Left colon (tissue), 2 donors: ENCODE measurements at regions of chr6 and their contacts with region 1.

Region 1: DNA sequence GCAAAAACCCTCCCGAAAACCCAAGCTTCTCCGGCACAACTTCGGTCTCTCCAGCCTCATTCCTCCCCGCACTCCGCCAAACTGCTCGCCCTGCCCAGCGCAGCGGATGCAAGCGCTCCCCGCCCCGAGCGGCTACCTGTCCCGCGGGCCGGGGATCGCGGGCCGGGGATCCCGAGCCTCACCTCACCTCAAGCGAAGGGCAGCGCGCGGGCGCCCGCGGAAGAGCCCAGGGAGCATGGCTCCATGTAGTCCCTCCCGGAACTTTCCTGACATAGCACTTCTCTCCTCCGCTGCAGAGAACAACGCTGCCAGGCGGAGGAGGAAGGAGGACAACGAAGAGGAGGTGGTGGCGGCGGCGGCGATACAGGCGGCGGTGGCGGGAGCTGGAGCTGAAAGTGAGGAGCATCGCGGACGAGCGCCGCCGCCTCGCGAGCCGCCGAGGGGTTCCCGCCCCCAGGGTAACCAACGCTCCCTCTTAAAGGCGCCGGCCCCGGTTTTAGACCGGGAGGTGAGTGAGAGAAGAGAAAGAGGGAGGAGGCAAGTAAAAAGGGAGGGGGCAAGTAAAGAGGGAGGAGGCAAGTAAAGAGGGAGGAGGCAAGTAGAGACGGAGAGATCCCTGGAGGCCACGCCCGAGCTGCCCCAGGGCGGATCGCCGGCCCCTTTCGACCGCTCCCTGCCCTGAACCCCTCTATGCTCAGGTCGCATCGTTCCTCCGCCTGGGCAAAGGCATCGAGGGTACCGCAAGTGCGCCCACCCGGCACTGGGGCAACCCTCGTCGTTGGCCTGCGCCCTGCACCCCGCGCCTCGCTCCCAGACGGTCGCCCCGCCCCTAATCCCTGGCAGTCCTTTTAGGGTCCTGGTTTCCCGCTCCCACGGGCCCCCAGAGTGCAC is at the start of gene GPR63:
- DNase-seq: peak; percentile 73 to 84
- ATAC-seq: peak; percentile 92
- total RNA-seq, gene GPR63: 1.1 to 1.8 TPM

Region 2: DNA sequence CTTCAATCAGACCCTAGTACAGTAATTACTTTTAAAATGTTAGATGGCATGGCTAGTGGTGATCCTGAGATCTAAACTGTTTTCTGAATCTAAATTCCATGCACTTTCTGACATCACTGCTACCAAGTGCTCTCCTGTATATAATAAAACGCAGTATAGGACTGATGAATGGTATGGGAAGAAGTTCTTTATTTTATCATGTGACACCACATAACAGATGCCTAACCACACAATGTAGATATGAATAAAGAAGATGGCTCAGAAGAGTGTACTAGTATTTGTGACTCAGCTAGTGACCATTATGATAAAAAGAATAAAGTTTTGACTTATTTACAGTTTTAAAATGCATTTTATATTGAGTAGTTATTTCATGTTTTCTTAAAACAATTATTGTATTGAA is 51.8 kb after region 1 on chr6:
- intact Hi-C with region 1: loop called in 1 of 2 experiments (anchors 10 kb)
- DNase-seq: no peak
- ATAC-seq: no peak